ENCODE measurements at regions of chr12 and their contacts with region 1.

Region 1: DNA sequence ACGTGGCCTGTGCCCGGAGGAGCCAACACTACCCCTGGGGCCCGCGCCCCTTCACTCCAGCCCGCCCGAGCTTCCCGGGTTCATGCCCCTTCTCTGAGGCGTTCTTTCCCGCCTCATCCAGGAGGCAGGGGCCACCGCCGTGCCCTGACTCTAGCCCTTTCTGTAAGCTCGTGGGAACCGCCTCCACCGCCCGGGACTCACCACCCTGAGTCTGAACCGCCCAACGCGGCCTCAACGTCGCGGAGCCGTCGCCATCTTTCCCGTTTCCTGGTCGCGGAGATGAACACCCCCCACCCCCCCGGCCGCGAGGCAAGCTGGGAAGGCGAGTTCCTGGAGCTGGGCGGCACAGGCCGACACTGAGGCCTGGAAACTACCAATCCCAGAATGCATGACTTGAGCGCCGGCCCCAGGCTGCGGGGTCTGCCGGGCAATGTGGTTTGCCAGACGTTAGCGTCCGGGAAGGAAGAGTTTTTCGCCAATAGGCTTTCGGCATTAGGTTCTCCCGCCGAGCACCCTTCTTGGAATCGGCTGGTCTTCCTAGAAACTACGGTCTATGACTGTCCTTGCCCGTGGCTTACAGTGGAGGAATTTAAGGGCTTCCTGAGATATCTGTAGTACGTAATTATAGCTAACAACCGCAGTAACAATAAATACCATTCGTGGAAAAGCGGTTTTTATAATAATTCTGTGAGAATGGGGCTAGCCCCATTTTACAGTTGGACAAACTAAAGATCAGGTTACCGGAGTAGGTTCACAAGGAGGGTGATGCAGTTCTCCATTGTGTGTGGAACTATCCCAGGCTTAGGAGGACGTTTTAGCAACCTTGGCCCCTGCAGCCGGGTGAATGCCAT is at the start of gene DDX23:
- DNase-seq: peak; percentile 91
- H3K4me3 Mint-ChIP-seq: peak within 1 kb of the TSS; percentile 97
- H3K27ac Mint-ChIP-seq: peak within 1 kb of the TSS; percentile 93
- H3K4me1 Mint-ChIP-seq: peaks cover 31% of the 10 kb centered on the region
- H3K27me3 Mint-ChIP-seq: no peaks in the 10 kb centered on the region
- total RNA-seq, gene DDX23: 120 and 127 TPM in 2 replicates

Region 2: GRCh38 chr12:48716493-48717251 is 135.4 kb before region 1 on chr12 and contains the start of gene CCNT1:
- intact Hi-C with region 1: loop called (anchors 1 kb)
- DNase-seq: peak; percentile 99
- H3K4me3 Mint-ChIP-seq: peak within 1 kb of the TSS; percentile 90
- H3K27ac Mint-ChIP-seq: peak within 1 kb of the TSS; percentile 93
- H3K4me1 Mint-ChIP-seq: peaks cover 43% of the 10 kb centered on the region
- H3K27me3 Mint-ChIP-seq: no peaks in the 10 kb centered on the region
- total RNA-seq, gene CCNT1: 67.2 and 67.7 TPM in 2 replicates

Region 3: GRCh38 chr12:48890657-48891418 is 38.7 kb after region 1 on chr12:
- intact Hi-C with region 1: loop called (anchors 1 kb)
- DNase-seq: peak; percentile 63
- H3K4me3 Mint-ChIP-seq: peak overlapping the region; percentile 8
- H3K27ac Mint-ChIP-seq: no peak overlapping the region
- H3K4me1 Mint-ChIP-seq: peaks cover 5% of the 10 kb centered on the region
- H3K27me3 Mint-ChIP-seq: peaks cover 28% of the 10 kb centered on the region

Region 4: DNA sequence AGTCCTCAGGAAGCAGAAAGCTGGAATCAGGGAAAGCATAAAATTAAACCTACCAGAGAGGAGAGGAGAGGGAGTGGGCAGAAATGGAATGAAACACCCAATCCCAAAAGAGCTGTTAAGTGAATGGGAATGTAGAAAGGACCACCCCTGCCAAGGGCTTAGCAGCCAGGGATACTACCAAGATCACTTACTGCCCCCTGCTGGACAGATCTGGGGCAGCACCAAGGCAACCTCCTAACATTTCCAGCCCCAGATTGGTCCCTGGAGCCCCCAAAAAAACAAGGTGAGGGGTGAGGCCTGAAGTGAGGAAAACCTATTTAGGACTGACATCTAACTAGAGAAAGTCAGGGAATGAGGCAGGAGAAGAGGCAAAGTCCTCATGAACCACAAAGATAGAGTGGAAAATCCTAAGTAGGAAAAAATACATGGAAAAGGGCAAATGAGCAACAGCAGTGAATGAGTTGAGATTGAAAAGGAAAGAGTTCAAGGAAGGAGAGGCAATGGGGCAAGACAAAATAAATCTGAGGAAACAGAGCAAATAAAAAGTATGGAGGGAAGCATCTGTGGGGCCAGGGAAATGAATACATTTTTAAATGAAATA is 84.4 kb after region 1 on chr12:
- intact Hi-C with region 1: loop called (anchors 1 kb)
- DNase-seq: peak; percentile 63
- H3K4me3 Mint-ChIP-seq: no peak overlapping the region
- H3K27ac Mint-ChIP-seq: no peak overlapping the region
- H3K4me1 Mint-ChIP-seq: peaks cover 41% of the 10 kb centered on the region
- H3K27me3 Mint-ChIP-seq: no peaks in the 10 kb centered on the region

Region 5: DNA sequence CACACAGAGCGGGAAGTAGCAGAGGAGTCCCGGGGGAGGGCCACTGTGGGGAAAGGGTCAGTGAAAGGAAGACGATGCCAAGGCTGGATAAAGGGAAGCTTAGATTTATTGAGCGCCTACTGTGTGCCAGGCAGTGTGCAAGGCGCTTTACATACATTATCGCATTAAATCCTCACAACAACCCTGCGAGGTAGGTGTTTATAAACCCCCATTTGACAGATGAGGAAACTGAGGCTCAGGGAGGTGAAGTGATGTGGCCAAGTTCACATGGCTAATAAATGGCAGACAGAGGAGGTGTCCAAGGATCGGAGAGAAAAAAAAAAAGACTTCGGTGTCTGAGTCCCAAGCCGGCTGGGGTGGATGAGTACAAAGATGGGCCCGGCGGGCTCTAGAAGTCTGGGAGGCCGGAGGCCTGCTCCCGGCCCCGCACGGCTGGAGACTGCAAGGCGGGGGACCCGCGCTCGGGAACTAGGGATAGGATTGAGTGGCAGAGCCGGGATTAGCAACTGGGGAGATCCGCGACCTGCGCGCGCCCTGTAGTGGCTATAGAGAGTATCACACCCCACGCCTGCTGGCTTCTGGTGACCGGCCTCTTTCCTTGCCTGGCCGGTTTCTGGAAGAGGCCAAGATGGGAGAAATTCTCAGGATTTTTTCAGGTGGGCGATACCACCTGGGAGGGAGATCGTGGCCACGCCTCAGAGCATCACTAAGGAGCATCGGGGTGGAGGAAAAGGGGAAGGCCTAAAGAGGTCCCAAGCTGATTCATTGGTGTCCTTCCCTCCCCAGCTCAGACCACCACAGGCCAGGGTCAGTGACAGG is 143.2 kb after region 1 on chr12:
- intact Hi-C with region 1: loop called (anchors 1 kb)
- DNase-seq: peak; percentile 39
- H3K4me3 Mint-ChIP-seq: no peak overlapping the region
- H3K27ac Mint-ChIP-seq: peak overlapping the region; percentile 52
- H3K4me1 Mint-ChIP-seq: peaks cover 25% of the 10 kb centered on the region
- H3K27me3 Mint-ChIP-seq: peaks cover 49% of the 10 kb centered on the region

Region 6: DNA sequence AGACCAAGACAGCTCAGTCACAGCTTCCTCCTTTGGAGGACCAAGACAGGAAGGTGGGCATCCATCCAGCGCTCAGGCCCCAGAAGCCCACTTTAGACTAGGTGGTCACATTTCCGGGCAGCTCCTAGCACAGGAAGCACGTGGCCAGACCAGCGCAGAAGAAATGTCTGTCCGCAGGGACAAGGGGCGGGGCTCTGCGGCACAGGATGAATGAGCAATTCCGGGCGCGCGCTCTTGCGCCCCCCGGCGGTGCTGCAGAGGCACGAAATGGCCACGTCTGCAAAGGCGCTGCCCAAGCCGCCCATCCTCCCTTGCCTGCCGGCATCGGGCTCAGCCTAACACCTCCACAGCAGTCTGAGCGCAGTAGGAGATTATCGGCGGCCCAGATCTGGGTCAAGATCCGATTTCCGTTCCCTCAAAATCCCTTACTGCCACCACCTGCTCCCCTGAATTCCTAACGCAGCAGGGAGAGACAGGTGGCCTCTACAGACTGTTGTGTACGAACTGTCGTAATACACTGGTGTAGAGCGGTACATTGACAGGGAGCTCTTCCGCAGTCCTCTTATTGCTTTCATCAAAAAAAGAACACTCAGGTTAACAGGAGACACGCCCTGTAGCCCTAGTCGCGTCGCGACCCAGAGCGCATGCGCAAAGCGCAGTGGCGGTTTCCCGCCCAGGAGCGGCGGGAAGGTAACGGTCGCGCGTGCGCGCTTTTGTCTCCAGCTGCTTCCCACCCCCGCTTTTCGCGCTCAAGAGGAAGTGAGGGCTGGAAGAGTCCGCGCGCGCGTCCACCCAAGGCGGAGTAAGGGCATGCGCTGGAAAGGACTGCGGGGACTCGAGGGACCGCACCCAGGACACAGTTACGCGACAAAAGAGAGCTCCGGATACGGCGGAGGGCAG is 278.3 kb after region 1 on chr12:
- intact Hi-C with region 1: loop called (anchors 1 kb)
- DNase-seq: peak; percentile 92
- H3K4me3 Mint-ChIP-seq: peak overlapping the region; percentile 98
- H3K27ac Mint-ChIP-seq: peak overlapping the region; percentile 93
- H3K4me1 Mint-ChIP-seq: peaks cover 59% of the 10 kb centered on the region
- H3K27me3 Mint-ChIP-seq: no peaks in the 10 kb centered on the region